AG04450 (cell line): ENCODE measurements at regions of chr17 and their contacts with region 1.

Region 1: GRCh38 chr17:39621523-39622379 is 5.0 kb upstream of the PPP1R1B start:
- DNase-seq: peak; percentile 44
- H3K4me3 ChIP-seq: no peak overlapping the region
- H3K27ac ChIP-seq: no peak overlapping the region
- H3K27me3 ChIP-seq: peaks cover 44% of the 10 kb centered on the region
- CTCF ChIP-seq: peak; percentile 100

Region 2: DNA sequence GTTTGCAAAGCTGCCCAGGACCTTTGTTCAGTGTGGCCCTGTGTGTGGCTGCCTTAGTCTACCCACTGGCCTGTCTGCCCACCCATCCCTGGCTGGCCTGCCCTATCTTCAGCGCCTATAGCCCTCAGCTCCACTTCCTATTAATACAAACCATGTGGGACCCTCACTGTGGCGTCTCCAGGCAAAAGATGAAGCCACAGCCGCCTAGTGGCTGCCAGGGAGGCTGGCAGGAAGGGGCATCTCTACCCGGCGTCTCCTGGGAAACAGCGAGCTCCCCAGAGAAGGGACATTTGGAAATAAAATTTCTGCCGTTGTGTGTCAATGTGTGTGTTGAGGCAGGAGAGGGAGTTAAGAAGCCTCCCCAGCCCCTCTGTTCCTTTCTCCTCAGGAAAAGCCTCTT is 45.6 kb before region 1 on chr17:
- CTCF ChIA-PET with region 1: interaction called, 11 read pairs
- POLR2A ChIA-PET with region 1: no interaction called
- DNase-seq: no peak
- H3K4me3 ChIP-seq: no peak overlapping the region
- H3K27ac ChIP-seq: no peak overlapping the region
- H3K27me3 ChIP-seq: peaks cover 27% of the 10 kb centered on the region
- CTCF ChIP-seq: peak; percentile 63

Region 3: GRCh38 chr17:39636927-39637736 is 15.4 kb after region 1 on chr17 and contains the start of gene STARD3:
- CTCF ChIA-PET with region 1: interaction called, 114 read pairs
- POLR2A ChIA-PET with region 1: interaction called, 3 read pairs
- DNase-seq: peak; percentile 44
- H3K4me3 ChIP-seq: peak within 1 kb of the TSS; percentile 92
- H3K27ac ChIP-seq: peak within 1 kb of the TSS; percentile 61
- H3K27me3 ChIP-seq: peaks cover 7% of the 10 kb centered on the region
- CTCF ChIP-seq: peak; percentile 17
- polyA plus RNA-seq, gene STARD3: 43.3 and 44.7 TPM in 2 replicates

Region 4: DNA sequence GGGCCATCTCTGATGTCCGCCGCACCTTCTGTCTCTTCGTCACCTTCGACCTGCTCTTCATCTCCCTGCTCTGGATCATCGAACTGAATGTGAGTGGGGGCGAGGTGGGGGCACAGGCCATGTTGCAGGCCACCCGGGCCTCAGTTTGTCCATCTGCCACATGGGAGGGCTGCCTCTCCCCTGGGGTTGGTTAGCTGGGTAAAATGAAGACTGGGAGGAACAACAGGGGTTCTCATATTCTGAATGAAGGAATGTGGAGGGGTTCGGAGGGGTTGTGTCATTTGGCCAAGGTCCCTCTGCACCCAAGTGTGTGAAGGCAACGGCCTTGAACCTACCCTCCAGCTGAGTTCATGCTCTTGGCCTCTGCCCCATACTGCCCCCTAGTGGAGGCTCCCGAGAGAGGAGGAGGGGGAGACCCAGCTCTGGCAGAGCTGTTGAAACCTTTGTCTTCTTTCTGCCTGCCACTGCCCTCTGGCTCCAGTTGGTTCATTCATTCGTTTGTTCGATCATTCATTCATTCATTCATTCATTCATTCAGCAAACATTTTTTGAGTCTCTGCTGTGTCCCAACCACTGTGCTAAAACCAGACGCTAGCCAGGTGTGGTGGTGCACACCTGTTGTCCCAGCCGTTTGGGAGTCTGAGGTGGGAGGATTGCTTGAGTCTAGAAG is 32.0 kb after region 1 on chr17:
- CTCF ChIA-PET with region 1: interaction called, 62 read pairs
- POLR2A ChIA-PET with region 1: no interaction called
- DNase-seq: no peak
- H3K4me3 ChIP-seq: no peak overlapping the region
- H3K27ac ChIP-seq: no peak overlapping the region
- H3K27me3 ChIP-seq: no peaks in the 10 kb centered on the region
- CTCF ChIP-seq: peak; percentile 82

Region 5: GRCh38 chr17:39699818-39700147 is 78.0 kb after region 1 on chr17 and contains the start of gene ERBB2:
- CTCF ChIA-PET with region 1: interaction called, 15 read pairs
- POLR2A ChIA-PET with region 1: interaction called, 6 read pairs
- DNase-seq: peak; percentile 41
- H3K4me3 ChIP-seq: peak within 1 kb of the TSS; percentile 77
- H3K27ac ChIP-seq: no peak within 1 kb of the TSS
- H3K27me3 ChIP-seq: no peaks in the 10 kb centered on the region
- CTCF ChIP-seq: no peak
- polyA plus RNA-seq, gene ERBB2: 21.2 and 27.9 TPM in 2 replicates

Region 6: DNA sequence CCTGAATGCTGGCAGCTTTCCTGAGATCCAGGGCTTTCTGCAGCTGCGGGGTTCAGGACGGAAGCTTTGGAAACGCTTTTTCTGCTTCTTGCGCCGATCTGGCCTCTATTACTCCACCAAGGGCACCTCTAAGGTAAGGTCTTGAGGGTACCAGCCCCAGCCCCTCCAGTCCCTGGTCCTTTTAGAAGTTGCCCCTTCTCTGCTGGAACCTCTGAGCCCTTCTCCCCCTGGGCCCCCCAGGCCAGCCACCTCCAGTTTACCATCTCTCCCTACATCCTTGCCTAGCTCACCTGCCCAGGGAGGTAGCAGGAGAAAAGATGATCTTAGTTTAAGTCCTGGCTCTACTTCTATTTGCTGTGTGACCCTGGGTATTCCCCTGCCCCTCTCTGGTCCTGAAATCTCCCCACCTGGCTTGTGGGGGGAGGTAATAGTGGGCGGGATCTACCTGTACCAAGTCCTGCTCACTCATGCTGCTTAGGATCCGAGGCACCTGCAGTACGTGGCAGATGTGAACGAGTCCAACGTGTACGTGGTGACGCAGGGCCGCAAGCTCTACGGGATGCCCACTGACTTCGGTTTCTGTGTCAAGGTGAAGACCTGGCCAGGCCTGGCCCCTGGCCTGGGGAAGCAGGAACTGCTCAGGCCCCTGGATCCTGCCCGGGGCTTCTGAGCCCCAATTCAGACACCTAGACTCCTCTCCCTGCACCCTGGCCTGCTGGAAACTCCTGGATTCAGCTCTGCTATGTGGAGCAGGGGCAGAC is 122.5 kb after region 1 on chr17:
- CTCF ChIA-PET with region 1: interaction called, 10 read pairs
- POLR2A ChIA-PET with region 1: no interaction called
- DNase-seq: no peak
- H3K4me3 ChIP-seq: no peak overlapping the region
- H3K27ac ChIP-seq: no peak overlapping the region
- H3K27me3 ChIP-seq: peaks cover 18% of the 10 kb centered on the region
- CTCF ChIP-seq: no peak

Region 7: GRCh38 chr17:40588552-40588951 is 966.8 kb after region 1 on chr17:
- CTCF ChIA-PET with region 1: no interaction called
- POLR2A ChIA-PET with region 1: no interaction called
- DNase-seq: no peak
- H3K4me3 ChIP-seq: no peak overlapping the region
- H3K27ac ChIP-seq: no peak overlapping the region
- H3K27me3 ChIP-seq: peaks cover 19% of the 10 kb centered on the region
- CTCF ChIP-seq: no peak